G401 (cell line): ENCODE measurements at regions of chr2 and their contacts with region 1.

Region 1: DNA sequence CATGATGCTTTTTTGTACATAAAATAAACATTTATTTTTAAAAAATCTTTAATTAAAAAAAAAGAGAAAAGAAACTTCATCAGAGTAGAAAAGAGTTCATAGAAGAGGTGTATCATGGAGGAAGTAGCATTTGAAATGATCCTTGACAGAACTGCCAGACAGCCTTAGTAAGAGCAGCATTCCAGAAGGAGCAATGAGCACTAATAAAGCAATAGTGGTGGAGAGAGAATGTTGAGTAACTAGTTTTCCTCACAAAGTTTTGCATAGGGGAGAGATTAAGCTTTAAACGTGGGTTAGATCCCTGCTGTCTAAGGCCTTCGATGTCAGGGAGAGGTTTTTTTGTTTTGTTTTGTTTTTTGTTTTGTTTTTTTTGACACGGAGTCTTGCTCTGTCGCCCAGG is 29.8 kb upstream of the METTL21A start:
- DNase-seq: no peak

Region 2: GRCh38 chr2:207734264-207734635 is 79.2 kb after region 1 on chr2:
- in situ Hi-C with region 1: loop called (anchors 5 kb)
- DNase-seq: no peak